ENCODE measurements at regions of chr2 and their contacts with region 1.

Region 1: DNA sequence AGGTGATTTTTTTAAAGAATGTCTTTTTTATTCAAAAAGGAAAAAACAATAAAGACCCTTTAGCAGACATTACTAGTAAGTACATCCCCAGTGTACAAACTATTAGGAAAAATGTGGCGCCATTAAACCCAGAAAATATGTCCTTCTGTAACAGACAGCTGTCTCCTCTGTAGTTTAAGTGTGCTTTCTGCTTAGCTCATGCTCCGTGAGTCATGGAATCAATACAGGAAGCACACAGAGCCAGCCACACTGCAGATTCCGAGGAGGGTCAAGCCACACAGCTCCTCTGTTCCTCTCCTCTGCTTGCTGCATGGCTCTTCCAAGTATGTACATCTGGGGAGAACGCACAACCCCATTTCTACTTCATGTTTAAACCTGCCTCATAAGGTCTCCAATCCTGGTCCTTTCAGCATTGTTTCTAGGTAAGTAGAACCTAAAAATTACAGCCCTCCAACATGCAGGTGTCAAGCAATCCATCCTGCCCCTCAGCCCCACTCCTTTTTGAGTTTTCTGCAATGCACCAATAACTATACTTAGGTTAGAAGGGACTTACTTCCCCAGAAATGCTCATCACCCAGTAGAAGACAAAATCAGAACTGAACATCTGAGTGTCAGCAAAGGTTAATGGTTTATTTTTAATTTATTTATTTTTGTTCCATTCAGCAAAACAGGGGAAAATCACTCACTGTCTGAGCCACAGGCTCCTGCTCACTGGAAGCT is 37.5 kb downstream of the ACVR1 start:
- DNase-seq: peak; percentile 30
- H3K4me3 ChIP-seq: no peak overlapping the region
- H3K27ac ChIP-seq: peak overlapping the region in 1 of 2 donors; percentile 60
- H3K4me1 ChIP-seq: peaks cover 3% of the 10 kb centered on the region
- H3K27me3 ChIP-seq: no peaks in the 10 kb centered on the region
- CTCF ChIP-seq: no peak
- POLR2A ChIP-seq: no peak

Region 2: GRCh38 chr2:158179660-158180059 is 341.1 kb after region 1 on chr2:
- intact Hi-C with region 1: loop called (anchors 10 kb)
- DNase-seq: no peak
- H3K4me3 ChIP-seq: no peak overlapping the region
- H3K27ac ChIP-seq: no peak overlapping the region
- H3K4me1 ChIP-seq: no peaks in the 10 kb centered on the region
- H3K27me3 ChIP-seq: no peaks in the 10 kb centered on the region
- CTCF ChIP-seq: peak in 2 of 3 experiments; percentile 7 to 20
- POLR2A ChIP-seq: no peak

Measured in testis (tissue), 5 donors.